Head of caudate nucleus (tissue), 42 donors: ENCODE measurements at regions of chr17 and their contacts with region 1.

Region 1: GRCh38 chr17:49694847-49695683 is 12.7 kb downstream of the SLC35B1 start:
- DNase-seq: peak in 39 of 42 donors; percentile 26 to 89 (median 69)

Region 2: DNA sequence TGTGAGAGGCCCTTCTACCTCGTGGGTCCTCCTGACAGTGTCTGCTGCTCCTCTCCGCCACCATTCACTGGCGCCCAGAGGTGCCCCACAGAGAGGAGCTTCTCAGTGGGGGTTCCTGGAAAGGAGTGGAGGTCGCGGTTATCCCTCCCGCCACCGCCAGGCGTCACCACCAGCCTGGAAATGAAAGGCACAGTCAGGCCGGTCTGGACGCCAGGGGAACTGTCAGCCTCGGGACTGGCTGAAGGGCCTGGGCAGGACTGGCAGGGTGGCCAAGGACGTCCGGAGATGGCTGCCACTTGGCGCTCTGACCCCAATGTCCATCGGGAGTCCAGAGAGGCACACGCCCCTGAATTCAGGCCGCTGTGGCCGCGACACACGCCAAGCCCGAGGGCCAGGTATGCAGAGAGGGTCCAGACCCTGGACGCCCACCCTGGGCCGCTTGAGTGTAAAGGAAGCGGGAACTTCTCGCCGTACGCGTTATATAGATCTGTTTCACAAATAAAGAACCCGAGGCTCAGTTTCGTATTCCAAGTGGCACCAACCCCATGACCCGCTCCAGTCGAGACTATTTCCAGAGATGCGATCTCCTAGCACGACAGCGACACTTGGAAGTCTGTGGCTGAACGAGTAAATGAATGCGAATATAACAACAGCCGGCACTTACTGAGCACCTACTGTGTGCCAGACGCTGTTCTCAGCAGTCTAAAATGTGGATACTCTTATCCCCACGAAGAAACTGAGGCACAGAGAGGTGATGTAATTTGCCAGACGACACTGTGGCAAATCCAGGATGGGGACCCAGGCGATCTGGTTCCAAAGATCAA is 127.0 kb before region 1 on chr17:
- intact Hi-C with region 1: loop called (anchors 2 kb)
- DNase-seq: peak; percentile 79 to 96 (median 89)